CD4-positive, alpha-beta memory T cell (primary cell): ENCODE measurements at regions of chr1 and their contacts with region 1.

Region 1: GRCh38 chr1:100377590-100378361 is 25.5 kb downstream of the CDC14A start:
- DNase-seq: no peak
- H3K4me3 ChIP-seq: no peak overlapping the region
- H3K4me3 Mint-ChIP-seq: peak overlapping the region; percentile 2 to 80 (median 46)
- H3K27ac ChIP-seq: peak overlapping the region; percentile 32
- H3K27ac Mint-ChIP-seq: peak overlapping the region; percentile 5 to 83 (median 72)
- H3K4me1 ChIP-seq: peaks cover 74% of the 10 kb centered on the region
- H3K4me1 Mint-ChIP-seq: peaks cover 53 to 95% (median 73%) of the 10 kb centered on the region in 4 donors
- H3K27me3 ChIP-seq: no peaks in the 10 kb centered on the region
- H3K27me3 Mint-ChIP-seq: no peaks in the 10 kb centered on the region

Region 2: DNA sequence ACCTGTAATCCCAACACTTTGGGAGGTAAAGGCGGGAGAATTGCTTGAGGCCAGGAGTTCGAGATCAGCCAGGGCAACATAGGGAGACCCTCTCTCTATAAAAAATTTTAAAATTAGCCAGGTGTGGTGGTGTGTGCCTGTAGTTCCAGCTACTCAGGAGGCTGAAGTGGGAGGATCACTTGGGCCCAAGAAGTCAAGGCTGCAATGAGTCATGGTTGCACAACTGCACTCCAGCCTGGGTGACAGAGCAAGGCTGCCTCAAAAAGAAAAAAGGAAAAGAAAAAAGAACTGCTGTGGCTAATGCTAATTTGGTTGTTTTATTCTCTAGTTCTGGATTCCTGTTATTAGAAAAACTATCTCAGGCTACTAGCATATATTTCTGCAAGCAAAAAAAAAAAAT is 157.9 kb before region 1 on chr1:
- CTCF ChIA-PET with region 1: no interaction called
- POLR2A ChIA-PET with region 1: no interaction called
- intact Hi-C with region 1: no loop called
- DNase-seq: no peak
- H3K4me3 ChIP-seq: no peak overlapping the region
- H3K4me3 Mint-ChIP-seq: no peak overlapping the region
- H3K27ac ChIP-seq: no peak overlapping the region
- H3K27ac Mint-ChIP-seq: peak overlapping the region in 2 of 7 donors; percentile 20 to 71
- H3K4me1 ChIP-seq: no peaks in the 10 kb centered on the region
- H3K4me1 Mint-ChIP-seq: peaks cover 0 to 1% (median 0%) of the 10 kb centered on the region in 4 donors
- H3K27me3 ChIP-seq: no peaks in the 10 kb centered on the region
- H3K27me3 Mint-ChIP-seq: no peaks in the 10 kb centered on the region

Region 3: DNA sequence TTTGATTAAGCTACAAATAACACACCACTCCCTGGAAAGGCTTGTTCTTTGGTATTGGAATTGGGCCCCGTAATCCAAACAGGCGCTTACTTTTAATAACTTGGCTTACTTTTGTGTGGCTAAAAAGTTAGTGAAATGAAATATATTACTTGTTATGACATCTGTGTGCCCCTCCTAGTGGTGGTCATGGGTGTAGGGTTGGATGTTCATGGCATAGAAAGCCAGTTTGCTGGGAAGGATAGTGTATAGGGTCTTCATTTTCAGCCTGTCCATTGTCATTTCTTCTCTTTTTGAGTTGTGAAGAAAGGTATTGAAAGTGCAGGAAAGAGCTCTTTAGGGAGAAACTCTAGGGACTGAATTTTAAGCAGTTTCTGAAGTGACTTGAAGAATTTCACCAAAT is 19.6 kb before region 1 on chr1:
- CTCF ChIA-PET with region 1: interaction called, 3 read pairs
- POLR2A ChIA-PET with region 1: interaction called, 283 read pairs
- intact Hi-C with region 1: loop called (anchors 1 kb)
- DNase-seq: no peak
- H3K4me3 ChIP-seq: no peak overlapping the region
- H3K4me3 Mint-ChIP-seq: peak overlapping the region; percentile 53 to 100 (median 96)
- H3K27ac ChIP-seq: no peak overlapping the region
- H3K27ac Mint-ChIP-seq: peak overlapping the region; percentile 5 to 97 (median 66)
- H3K4me1 ChIP-seq: peaks cover 85% of the 10 kb centered on the region
- H3K4me1 Mint-ChIP-seq: peaks cover 63 to 98% (median 79%) of the 10 kb centered on the region in 4 donors
- H3K27me3 ChIP-seq: no peaks in the 10 kb centered on the region
- H3K27me3 Mint-ChIP-seq: no peaks in the 10 kb centered on the region

Region 4: GRCh38 chr1:100364697-100365096 is 13.1 kb before region 1 on chr1:
- CTCF ChIA-PET with region 1: interaction called, 5 read pairs
- POLR2A ChIA-PET with region 1: interaction called, 283 read pairs
- intact Hi-C with region 1: loop called (anchors 1 kb)
- DNase-seq: no peak
- H3K4me3 ChIP-seq: no peak overlapping the region
- H3K4me3 Mint-ChIP-seq: peak overlapping the region; percentile 0 to 83 (median 72)
- H3K27ac ChIP-seq: peak overlapping the region; percentile 19
- H3K27ac Mint-ChIP-seq: peak overlapping the region; percentile 20 to 92 (median 77)
- H3K4me1 ChIP-seq: peaks cover 92% of the 10 kb centered on the region
- H3K4me1 Mint-ChIP-seq: peaks cover 63 to 91% (median 77%) of the 10 kb centered on the region in 4 donors
- H3K27me3 ChIP-seq: no peaks in the 10 kb centered on the region
- H3K27me3 Mint-ChIP-seq: no peaks in the 10 kb centered on the region